Esophagus muscularis mucosa (tissue), 4 donors: ENCODE measurements at regions of chr5 and their contacts with region 1.

Region 1: GRCh38 chr5:142769741-142770631 is at the start of gene ARHGAP26:
- DNase-seq: peak; percentile 99
- H3K4me3 ChIP-seq: peak within 1 kb of the TSS; percentile 73 to 80 (median 78)
- H3K27ac ChIP-seq: peak within 1 kb of the TSS; percentile 81 to 92 (median 92)
- H3K4me1 ChIP-seq: peaks cover 22 to 38% (median 28%) of the 10 kb centered on the region in 4 donors
- H3K27me3 ChIP-seq: no peaks in the 10 kb centered on the region
- CTCF ChIP-seq: peak in 2 of 3 experiments; percentile 5 to 33
- EP300 ChIP-seq: no peak
- POLR2A ChIP-seq: peak; percentile 97
- total RNA-seq, gene ARHGAP26: 22.3 to 40.7 (median 28.2) TPM

Region 2: GRCh38 chr5:142716963-142717362 is 53.0 kb before region 1 on chr5:
- intact Hi-C with region 1: loop called (anchors 5 kb)
- DNase-seq: no peak
- H3K4me3 ChIP-seq: no peak overlapping the region
- H3K27ac ChIP-seq: peak overlapping the region in 2 of 4 donors; percentile 56 to 60
- H3K4me1 ChIP-seq: peaks cover 18 to 34% (median 27%) of the 10 kb centered on the region in 4 donors
- H3K27me3 ChIP-seq: peaks cover 0 to 3% (median 0%) of the 10 kb centered on the region in 4 donors
- CTCF ChIP-seq: peak in 2 of 3 experiments; percentile 46 to 54
- EP300 ChIP-seq: no peak
- POLR2A ChIP-seq: no peak

Region 3: DNA sequence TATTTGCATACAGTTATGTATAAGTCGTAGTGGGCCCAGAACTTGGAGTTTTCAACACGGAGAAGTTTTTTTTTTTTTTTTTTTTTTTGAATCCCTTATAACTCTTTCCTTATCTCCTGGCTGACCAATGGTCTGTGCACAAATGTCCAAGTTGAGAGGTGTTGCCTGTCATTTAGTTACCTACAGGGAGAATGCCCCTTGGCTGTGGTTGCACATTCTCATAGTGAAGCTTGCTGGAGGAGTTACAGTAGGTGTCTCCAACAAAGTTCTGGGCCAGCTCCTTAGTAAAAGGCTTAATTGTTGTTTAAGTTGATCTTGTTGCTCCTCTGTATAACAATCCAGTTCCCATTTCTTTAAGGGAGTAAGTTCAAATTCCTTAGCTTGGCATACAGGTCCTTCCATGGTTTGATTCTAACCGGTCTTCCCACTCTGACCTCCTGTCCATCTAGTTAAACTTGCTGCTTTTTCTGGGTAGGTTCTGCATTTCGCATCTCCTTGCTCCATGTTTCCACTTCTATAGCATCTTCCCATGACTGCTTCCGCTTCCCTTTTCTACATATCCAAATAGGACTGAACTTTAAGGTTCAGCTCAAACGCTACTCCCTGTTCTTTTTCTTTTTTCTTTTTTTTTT is 95.5 kb after region 1 on chr5:
- intact Hi-C with region 1: loop called (anchors 2 kb)
- DNase-seq: no peak
- H3K4me3 ChIP-seq: no peak overlapping the region
- H3K27ac ChIP-seq: no peak overlapping the region
- H3K4me1 ChIP-seq: peaks cover 72 to 95% (median 81%) of the 10 kb centered on the region in 4 donors
- H3K27me3 ChIP-seq: no peaks in the 10 kb centered on the region
- CTCF ChIP-seq: no peak
- EP300 ChIP-seq: no peak
- POLR2A ChIP-seq: no peak